ENCODE measurements at regions of chr1 and their contacts with region 1.

Region 1: GRCh38 chr1:84117868-84118267 is 26.2 kb upstream of the PRKACB start:
- DNase-seq: no peak
- ATAC-seq: no peak
- H3K4me3 ChIP-seq: no peak overlapping the region
- H3K27ac ChIP-seq: no peak overlapping the region
- H3K4me1 ChIP-seq: no peaks in the 10 kb centered on the region
- H3K27me3 ChIP-seq: no peaks in the 10 kb centered on the region
- CTCF ChIP-seq: no peak
- EP300 ChIP-seq: no peak
- POLR2A ChIP-seq: no peak
- RAD21 ChIP-seq: no peak

Region 2: GRCh38 chr1:83998498-83999315 is 119.2 kb before region 1 on chr1 and contains the start of gene TTLL7:
- CTCF ChIA-PET with region 1: no interaction called
- POLR2A ChIA-PET with region 1: no interaction called
- in situ Hi-C with region 1: no loop called
- intact Hi-C with region 1: loop called (anchors 2 kb)
- DNase-seq: peak; percentile 10
- ATAC-seq: peak; percentile 93
- H3K4me3 ChIP-seq: peak within 1 kb of the TSS; percentile 60 to 76 (median 75); a peak in 5 of 6 replicates
- H3K27ac ChIP-seq: no peak within 1 kb of the TSS
- H3K4me1 ChIP-seq: peaks cover 6% of the 10 kb centered on the region
- H3K27me3 ChIP-seq: peaks cover 1 to 23% of the 10 kb centered on the region in 2 experiments; a peak in 4 of 5 replicates
- CTCF ChIP-seq: no peak
- EP300 ChIP-seq: no peak
- POLR2A ChIP-seq: no peak
- RAD21 ChIP-seq: no peak
- total RNA-seq, gene TTLL7: 0.22 and 0.38 TPM in 2 replicates

Region 3: GRCh38 chr1:84037758-84038611 is 79.9 kb before region 1 on chr1:
- CTCF ChIA-PET with region 1: no interaction called
- POLR2A ChIA-PET with region 1: no interaction called
- in situ Hi-C with region 1: no loop called
- intact Hi-C with region 1: no loop called
- DNase-seq: peak; percentile 3
- ATAC-seq: peak; percentile 62
- H3K4me3 ChIP-seq: peak overlapping the region in 2 of 3 experiments; percentile 18 to 35; a peak in 2 of 6 replicates
- H3K27ac ChIP-seq: no peak overlapping the region
- H3K4me1 ChIP-seq: no peaks in the 10 kb centered on the region
- H3K27me3 ChIP-seq: no peaks in the 10 kb centered on the region
- CTCF ChIP-seq: peak; percentile 18; the same call in 1 of the 2 replicates
- EP300 ChIP-seq: no peak
- POLR2A ChIP-seq: no peak
- RAD21 ChIP-seq: no peak

Measured in HepG2 (cell line).